CD8-positive, alpha-beta T cell (primary cell): ENCODE measurements at regions of chr6 and their contacts with region 1.

Region 1: DNA sequence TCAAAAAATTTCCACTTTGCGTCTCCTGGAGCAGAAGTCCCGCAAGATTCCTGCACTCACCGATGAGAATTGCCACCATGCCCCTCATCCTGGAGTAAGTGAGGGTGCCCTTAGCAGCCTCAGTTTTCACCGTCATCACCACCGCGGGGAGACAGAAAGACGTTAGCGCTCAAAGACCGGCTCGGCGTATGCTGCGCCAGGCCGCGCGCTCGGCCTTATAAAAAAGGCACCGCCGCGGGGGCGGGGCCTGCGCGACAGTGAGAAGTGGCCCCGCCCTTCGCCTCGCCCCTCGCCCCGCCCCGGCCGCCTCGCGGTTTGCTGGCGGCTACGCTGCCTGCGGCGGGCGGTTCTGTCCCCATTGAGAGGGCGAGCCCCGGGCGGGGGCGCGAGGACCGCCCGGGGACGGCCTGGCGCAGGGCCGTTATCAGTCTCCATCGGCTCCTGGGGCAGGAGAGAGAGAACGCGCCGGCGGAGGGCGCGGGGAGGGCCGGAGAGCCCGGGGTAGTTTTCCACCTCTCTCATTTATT is 122.3 kb upstream of the SLC2A12 start:
- DNase-seq: peak; percentile 88 to 97 (median 94)
- ATAC-seq: peak; percentile 77
- H3K4me3 ChIP-seq: peak overlapping the region; percentile 64 to 87
- H3K4me3 Mint-ChIP-seq: peak overlapping the region; percentile 98
- H3K27ac ChIP-seq: peak overlapping the region; percentile 67 to 79
- H3K27ac Mint-ChIP-seq: peak overlapping the region; percentile 94
- H3K4me1 ChIP-seq: peaks cover 63% of the 10 kb centered on the region
- H3K4me1 Mint-ChIP-seq: peaks cover 71% of the 10 kb centered on the region
- H3K27me3 ChIP-seq: no peaks in the 10 kb centered on the region
- H3K27me3 Mint-ChIP-seq: no peaks in the 10 kb centered on the region
- CTCF ChIP-seq: no peak

Region 2: GRCh38 chr6:132813173-132813856 is 1361.4 kb before region 1 on chr6:
- CTCF ChIA-PET with region 1: no interaction called
- POLR2A ChIA-PET with region 1: no interaction called
- intact Hi-C with region 1: loop called in 1 of 2 experiments (anchors 10 kb)
- DNase-seq: peak in 8 of 9 experiments; percentile 23 to 81 (median 40)
- ATAC-seq: peak; percentile 17
- H3K4me3 ChIP-seq: peak overlapping the region; percentile 83 to 87
- H3K4me3 Mint-ChIP-seq: peak overlapping the region; percentile 97
- H3K27ac ChIP-seq: peak overlapping the region; percentile 69 to 87
- H3K27ac Mint-ChIP-seq: peak overlapping the region; percentile 99
- H3K4me1 ChIP-seq: peaks cover 25% of the 10 kb centered on the region
- H3K4me1 Mint-ChIP-seq: peaks cover 49% of the 10 kb centered on the region
- H3K27me3 ChIP-seq: no peaks in the 10 kb centered on the region
- H3K27me3 Mint-ChIP-seq: no peaks in the 10 kb centered on the region
- CTCF ChIP-seq: no peak

Region 3: DNA sequence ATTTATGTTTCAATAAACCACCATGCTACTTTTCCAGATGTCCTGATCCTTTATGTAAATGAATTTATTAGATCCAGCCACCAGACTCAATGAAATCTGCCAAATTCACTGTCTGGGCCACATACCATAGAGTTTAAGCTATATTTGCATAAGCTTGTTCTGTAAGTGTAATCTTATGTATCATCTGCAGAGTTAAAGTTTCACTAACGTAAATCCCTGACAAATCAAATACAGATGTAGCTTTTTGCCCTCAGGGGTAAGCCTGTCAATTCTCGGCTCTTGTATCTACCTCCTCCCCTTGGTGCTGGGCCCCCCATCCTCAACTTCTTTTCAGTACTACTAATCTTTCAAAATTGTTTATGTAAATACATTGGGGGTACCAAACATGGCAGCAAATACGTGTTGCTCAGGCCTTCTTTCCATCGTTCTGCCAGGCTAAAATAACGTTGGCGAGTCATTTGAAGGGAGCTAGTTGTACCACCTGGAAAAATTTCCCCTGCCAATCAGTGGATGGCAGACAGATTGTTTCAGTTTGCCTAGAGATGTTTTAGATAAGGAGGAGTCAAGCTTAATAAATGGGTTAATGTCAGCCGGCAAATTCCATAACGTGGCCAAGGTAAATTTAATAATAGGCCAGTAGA is 1280.8 kb before region 1 on chr6:
- CTCF ChIA-PET with region 1: no interaction called
- POLR2A ChIA-PET with region 1: no interaction called
- intact Hi-C with region 1: no loop called
- DNase-seq: no peak
- ATAC-seq: no peak
- H3K4me3 ChIP-seq: no peak overlapping the region
- H3K4me3 Mint-ChIP-seq: no peak overlapping the region
- H3K27ac ChIP-seq: no peak overlapping the region
- H3K27ac Mint-ChIP-seq: no peak overlapping the region
- H3K4me1 ChIP-seq: no peaks in the 10 kb centered on the region
- H3K4me1 Mint-ChIP-seq: no peaks in the 10 kb centered on the region
- H3K27me3 ChIP-seq: peaks cover 0 to 3% of the 10 kb centered on the region in 2 experiments
- H3K27me3 Mint-ChIP-seq: peaks cover 7% of the 10 kb centered on the region
- CTCF ChIP-seq: no peak

Region 4: DNA sequence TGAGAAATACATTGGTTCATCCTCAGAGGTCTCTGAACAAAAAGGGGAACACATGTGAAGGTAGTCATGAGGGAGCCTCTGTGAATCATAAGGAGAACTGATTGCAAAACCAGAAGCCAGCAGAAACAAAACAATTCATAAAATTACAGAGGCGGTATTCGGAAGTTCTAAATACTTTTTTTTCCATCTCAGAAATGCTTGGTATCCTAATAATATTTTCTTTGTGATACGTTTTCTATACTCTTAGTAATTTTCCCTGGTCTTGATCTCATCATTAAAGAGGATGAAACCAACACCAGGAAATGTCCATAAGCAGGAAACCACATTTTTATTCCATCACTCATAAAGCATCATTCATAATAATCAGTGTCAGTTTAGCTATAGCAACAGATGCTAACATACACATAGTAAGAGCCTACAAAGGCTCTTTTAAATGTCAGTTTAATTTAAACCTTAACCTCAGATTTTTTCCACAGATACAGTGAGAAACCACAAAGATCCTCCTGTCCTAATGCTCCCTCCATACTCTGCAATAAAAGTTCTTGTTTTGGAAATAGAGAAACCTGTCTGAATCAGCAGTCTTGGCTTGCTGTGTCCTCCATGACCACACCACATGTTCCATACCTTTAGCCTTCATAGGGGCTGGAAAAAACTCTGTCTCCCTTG is 113.9 kb after region 1 on chr6:
- CTCF ChIA-PET with region 1: no interaction called
- POLR2A ChIA-PET with region 1: no interaction called
- intact Hi-C with region 1: loop called in 1 of 2 experiments (anchors 5 kb)
- DNase-seq: peak in 1 of 9 experiments; percentile 32
- ATAC-seq: peak; percentile 31
- H3K4me3 ChIP-seq: no peak overlapping the region
- H3K4me3 Mint-ChIP-seq: no peak overlapping the region
- H3K27ac ChIP-seq: peak overlapping the region in 1 of 2 experiments; percentile 24
- H3K27ac Mint-ChIP-seq: no peak overlapping the region
- H3K4me1 ChIP-seq: peaks cover 13% of the 10 kb centered on the region
- H3K4me1 Mint-ChIP-seq: peaks cover 20% of the 10 kb centered on the region
- H3K27me3 ChIP-seq: no peaks in the 10 kb centered on the region
- H3K27me3 Mint-ChIP-seq: no peaks in the 10 kb centered on the region
- CTCF ChIP-seq: no peak

Region 5: DNA sequence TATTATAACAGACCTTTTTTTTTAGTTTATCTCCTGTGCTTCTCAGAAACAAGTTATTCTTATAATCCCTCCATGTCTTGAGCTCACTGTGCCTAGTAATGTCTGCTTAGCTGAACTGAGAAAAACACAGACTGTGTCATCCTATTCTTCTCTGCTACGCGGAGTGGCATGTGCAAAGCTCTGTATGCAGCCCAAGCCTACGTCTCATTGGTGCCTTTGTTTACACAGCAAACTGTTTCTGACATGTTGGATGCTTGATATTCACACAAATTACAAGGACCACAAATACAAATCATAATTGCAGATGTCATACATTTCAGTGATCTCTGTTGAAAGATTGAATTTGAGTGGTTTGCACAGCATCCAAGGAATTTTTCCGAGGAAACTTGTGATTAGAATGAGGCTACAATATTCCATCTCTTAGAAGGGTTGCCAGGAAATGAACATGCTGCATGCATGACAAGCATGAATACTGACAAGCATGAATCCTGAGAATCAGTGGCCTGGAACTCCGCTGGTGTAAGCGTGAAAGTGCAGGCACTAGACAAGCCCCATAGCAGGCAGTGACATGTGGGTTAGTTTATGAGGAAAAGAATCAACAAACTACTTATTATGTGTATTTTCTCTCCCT is 271.6 kb after region 1 on chr6:
- CTCF ChIA-PET with region 1: no interaction called
- POLR2A ChIA-PET with region 1: no interaction called
- intact Hi-C with region 1: loop called in 1 of 2 experiments (anchors 5 kb)
- DNase-seq: no peak
- ATAC-seq: no peak
- H3K4me3 ChIP-seq: no peak overlapping the region
- H3K4me3 Mint-ChIP-seq: no peak overlapping the region
- H3K27ac ChIP-seq: no peak overlapping the region
- H3K27ac Mint-ChIP-seq: no peak overlapping the region
- H3K4me1 ChIP-seq: no peaks in the 10 kb centered on the region
- H3K4me1 Mint-ChIP-seq: no peaks in the 10 kb centered on the region
- H3K27me3 ChIP-seq: no peaks in the 10 kb centered on the region
- H3K27me3 Mint-ChIP-seq: no peaks in the 10 kb centered on the region
- CTCF ChIP-seq: no peak

Region 6: DNA sequence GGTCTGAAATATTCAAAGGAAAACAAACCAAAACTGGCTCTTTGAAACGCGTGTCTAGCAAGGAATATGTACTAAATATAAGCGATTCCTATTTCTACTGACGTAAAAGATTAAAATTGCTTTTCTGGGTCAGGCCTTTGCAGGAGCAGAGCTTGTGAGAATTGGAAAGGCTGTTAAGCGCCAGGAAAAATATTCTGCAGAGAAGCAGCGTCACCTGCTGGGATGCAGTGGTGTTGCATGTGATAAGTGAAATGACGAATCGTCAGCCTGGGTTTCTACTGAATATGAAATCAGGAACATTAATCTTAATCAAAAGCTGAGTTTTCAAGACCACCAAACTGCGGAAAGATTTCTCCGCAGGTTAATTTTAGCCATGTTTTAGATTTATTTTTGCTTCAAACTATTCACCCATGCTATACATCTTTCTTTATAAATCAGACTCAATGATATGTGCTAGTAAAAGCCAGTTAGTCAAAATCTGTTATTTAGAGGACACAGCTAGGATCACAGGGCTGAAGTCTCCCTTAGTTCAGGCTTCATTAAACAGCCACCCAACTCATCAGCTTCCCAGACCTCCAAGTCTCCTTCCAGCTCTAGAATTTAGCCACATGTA is 707.8 kb after region 1 on chr6:
- CTCF ChIA-PET with region 1: interaction called, 5 read pairs
- POLR2A ChIA-PET with region 1: no interaction called
- intact Hi-C with region 1: loop called (anchors 1 kb)
- DNase-seq: peak; percentile 5 to 70 (median 32)
- ATAC-seq: peak; percentile 48
- H3K4me3 ChIP-seq: no peak overlapping the region
- H3K4me3 Mint-ChIP-seq: no peak overlapping the region
- H3K27ac ChIP-seq: no peak overlapping the region
- H3K27ac Mint-ChIP-seq: no peak overlapping the region
- H3K4me1 ChIP-seq: no peaks in the 10 kb centered on the region
- H3K4me1 Mint-ChIP-seq: no peaks in the 10 kb centered on the region
- H3K27me3 ChIP-seq: no peaks in the 10 kb centered on the region
- H3K27me3 Mint-ChIP-seq: peaks cover 8% of the 10 kb centered on the region
- CTCF ChIP-seq: peak; percentile 70

Region 7: DNA sequence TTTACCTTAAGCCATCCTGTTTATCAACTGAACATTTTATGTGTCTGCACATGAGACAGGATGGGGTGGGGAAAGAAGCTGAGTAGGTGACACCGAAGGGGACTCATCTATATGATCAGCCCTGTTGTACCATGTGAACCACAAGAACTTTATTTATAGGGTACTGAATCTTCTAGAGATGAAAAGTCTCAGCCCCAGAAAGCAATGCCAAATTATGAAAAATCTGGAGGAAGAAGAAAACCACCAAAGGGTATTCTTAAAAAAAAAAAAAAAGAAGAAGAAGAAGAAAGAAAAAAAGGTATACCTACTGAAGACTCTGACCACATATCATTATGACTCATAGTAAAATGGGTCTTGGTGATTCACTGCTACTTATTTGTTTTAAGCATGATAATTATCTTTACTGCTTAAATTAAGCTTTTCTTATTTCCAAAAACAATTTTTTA is 919.7 kb after region 1 on chr6:
- CTCF ChIA-PET with region 1: no interaction called
- POLR2A ChIA-PET with region 1: no interaction called
- intact Hi-C with region 1: loop called (anchors 10 kb)
- DNase-seq: peak in 7 of 9 experiments; percentile 27 to 79 (median 64)
- ATAC-seq: peak; percentile 95
- H3K4me3 ChIP-seq: no peak overlapping the region
- H3K4me3 Mint-ChIP-seq: peak overlapping the region; percentile 0
- H3K27ac ChIP-seq: peak overlapping the region; percentile 29 to 33
- H3K27ac Mint-ChIP-seq: peak overlapping the region; percentile 83
- H3K4me1 ChIP-seq: peaks cover 46% of the 10 kb centered on the region
- H3K4me1 Mint-ChIP-seq: peaks cover 68% of the 10 kb centered on the region
- H3K27me3 ChIP-seq: no peaks in the 10 kb centered on the region
- H3K27me3 Mint-ChIP-seq: no peaks in the 10 kb centered on the region
- CTCF ChIP-seq: no peak